SK-N-SH (cell line): ENCODE measurements at regions of chr4 and their contacts with region 1.

Region 1: GRCh38 chr4:70993181-70994068 is at the start of gene DCK:
- DNase-seq: peak; percentile 96
- H3K4me3 ChIP-seq: peak within 1 kb of the TSS; percentile 85 to 92
- H3K27ac ChIP-seq: peak within 1 kb of the TSS; percentile 79 to 92
- H3K4me1 ChIP-seq: peaks cover 7 to 10% of the 10 kb centered on the region in 2 experiments; a peak in 2 of 4 replicates
- H3K27me3 ChIP-seq: no peaks in the 10 kb centered on the region
- CTCF ChIP-seq: no peak
- EP300 ChIP-seq: no peak
- RAD21 ChIP-seq: no peak; the same call in 1 of the 2 replicates
- polyA plus RNA-seq, gene DCK: 5.7 and 6.6 TPM in 2 replicates

Region 2: DNA sequence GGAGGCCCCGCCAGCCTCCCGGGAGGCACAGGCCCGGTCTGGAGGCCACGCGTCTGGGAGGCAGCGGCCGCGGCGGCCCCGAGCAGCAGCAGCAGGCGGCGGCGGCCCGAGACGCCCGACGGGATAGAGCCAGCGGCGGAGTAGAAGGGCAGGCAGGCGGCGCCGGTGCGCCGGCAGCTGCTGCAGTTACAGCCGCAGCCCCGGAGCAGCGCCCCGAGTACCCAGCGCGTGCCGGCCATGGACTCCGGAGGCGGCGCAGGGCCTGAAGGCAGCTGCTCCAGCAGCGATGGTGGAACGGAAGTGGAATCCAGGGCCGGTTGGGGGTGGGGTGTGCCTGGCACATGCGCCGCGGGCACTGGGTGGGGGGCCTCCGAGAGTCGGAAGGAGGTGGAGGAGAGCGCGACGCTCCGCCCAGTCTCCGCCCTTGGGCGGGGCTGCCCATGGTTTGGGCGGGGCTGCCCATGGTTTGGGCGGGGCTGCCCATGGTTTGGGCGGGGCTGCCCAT is 153.8 kb before region 1 on chr4 and contains the start of gene GRSF1:
- CTCF ChIA-PET with region 1: no interaction called
- POLR2A ChIA-PET with region 1: interaction called, 12 read pairs
- DNase-seq: peak; percentile 97
- H3K4me3 ChIP-seq: peak within 1 kb of the TSS; percentile 81 to 87
- H3K27ac ChIP-seq: peak within 1 kb of the TSS; percentile 79 to 87
- H3K4me1 ChIP-seq: peaks cover 0 to 4% of the 10 kb centered on the region in 2 experiments; a peak in 2 of 4 replicates
- H3K27me3 ChIP-seq: no peaks in the 10 kb centered on the region
- CTCF ChIP-seq: no peak
- EP300 ChIP-seq: no peak
- RAD21 ChIP-seq: no peak
- polyA plus RNA-seq, gene GRSF1: 44.2 and 63.7 TPM in 2 replicates

Region 3: GRCh38 chr4:70901984-70902576 is 91.3 kb before region 1 on chr4 and contains the start of gene MOB1B:
- CTCF ChIA-PET with region 1: interaction called, 3 read pairs
- POLR2A ChIA-PET with region 1: interaction called, 15 read pairs
- DNase-seq: peak; percentile 97
- H3K4me3 ChIP-seq: peak within 1 kb of the TSS; percentile 77 to 99
- H3K27ac ChIP-seq: peak within 1 kb of the TSS; percentile 77 to 88
- H3K4me1 ChIP-seq: peaks cover 0 to 2% of the 10 kb centered on the region in 2 experiments; a peak in 3 of 4 replicates
- H3K27me3 ChIP-seq: no peaks in the 10 kb centered on the region
- CTCF ChIP-seq: peak; percentile 36
- EP300 ChIP-seq: no peak
- RAD21 ChIP-seq: no peak
- polyA plus RNA-seq, gene MOB1B: 2.9 and 4.6 TPM in 2 replicates

Region 4: DNA sequence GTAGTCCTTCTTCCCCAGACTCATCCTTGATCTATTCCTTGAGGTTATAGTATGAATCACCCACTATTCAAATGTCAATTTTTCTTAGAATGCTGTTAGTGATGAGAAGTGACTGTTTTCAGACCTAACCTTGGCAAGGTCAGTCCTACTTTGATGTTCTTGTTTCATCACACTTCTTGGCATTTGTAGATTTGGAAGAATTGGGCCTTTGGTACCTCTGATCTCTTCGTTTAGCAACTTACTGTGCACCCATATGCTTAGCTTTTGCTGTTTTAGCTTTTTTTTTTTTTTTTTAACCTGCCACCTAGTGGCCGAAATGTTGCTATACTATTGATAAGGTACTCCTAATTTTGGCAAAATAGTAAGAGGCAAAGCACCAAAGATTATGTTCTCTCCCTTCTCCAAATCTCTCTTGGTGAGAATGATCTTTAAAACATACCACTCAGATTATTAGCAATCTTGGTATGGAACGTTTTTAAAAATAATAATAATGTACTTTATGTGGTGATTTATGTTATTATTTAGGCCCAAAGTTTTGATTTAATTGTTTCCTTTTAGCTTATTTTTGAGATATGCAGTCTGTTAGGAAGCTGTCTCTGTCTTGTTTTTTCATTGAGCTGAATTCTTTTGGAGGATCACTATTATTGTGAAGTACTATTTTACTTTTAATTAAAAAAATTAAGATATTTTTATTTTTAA is 16.6 kb after region 1 on chr4:
- CTCF ChIA-PET with region 1: interaction called, 20 read pairs
- POLR2A ChIA-PET with region 1: interaction called, 3 read pairs
- DNase-seq: peak; percentile 49
- H3K4me3 ChIP-seq: no peak overlapping the region; a peak in 1 of 4 replicates
- H3K27ac ChIP-seq: peak overlapping the region; percentile 40 to 44
- H3K4me1 ChIP-seq: peaks cover 4 to 13% of the 10 kb centered on the region in 2 experiments; a peak in 2 of 4 replicates
- H3K27me3 ChIP-seq: no peaks in the 10 kb centered on the region
- CTCF ChIP-seq: peak; percentile 85
- EP300 ChIP-seq: no peak
- RAD21 ChIP-seq: peak; percentile 57